ENCODE measurements at regions of chr9 and their contacts with region 1.

Region 1: DNA sequence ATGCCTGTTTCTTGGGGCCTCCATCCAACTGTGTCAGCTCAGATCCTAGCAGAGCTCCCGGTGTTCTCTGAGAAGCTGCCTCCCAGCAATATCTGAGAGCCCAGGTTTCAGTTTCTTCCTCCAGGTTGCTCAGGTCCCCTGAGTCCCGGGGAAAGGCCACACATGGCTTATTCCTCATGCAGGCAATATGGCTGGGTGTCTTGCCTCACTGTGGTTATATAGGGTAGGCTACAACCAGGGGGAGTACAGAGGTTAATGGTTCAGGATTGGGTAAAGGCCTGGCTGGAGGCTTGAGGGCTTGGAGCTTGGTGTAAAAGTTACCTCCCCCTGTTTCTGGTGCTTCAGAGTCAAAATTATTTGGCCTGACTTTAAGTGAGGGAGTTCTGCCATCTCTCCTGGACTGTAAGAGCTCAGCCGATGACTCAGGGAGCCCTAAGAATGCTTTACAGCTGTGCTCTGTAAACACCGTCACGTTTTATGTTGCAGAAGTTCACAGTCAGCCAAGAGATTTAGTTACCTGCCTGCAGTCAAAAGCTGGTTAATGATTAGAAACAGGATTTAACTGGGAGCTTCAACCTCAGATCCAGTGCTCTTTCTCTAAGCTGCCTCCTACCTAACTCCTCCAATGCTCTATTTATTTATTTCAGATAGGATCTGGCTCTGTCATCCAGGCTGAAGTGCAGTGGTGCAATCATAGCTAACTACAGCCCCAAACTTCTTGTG is 24.3 kb upstream of the UBAP2 start:
- DNase-seq: peak in 1 of 4 experiments; percentile 14
- ATAC-seq: peak; percentile 68
- H3K4me3 ChIP-seq: no peak overlapping the region
- H3K27ac ChIP-seq: no peak overlapping the region; the same call in 2 of the 3 replicates
- H3K4me1 ChIP-seq: peaks cover 2 to 7% of the 10 kb centered on the region in 2 experiments; a peak in 4 of 5 replicates
- H3K27me3 ChIP-seq: no peaks in the 10 kb centered on the region
- CTCF ChIP-seq: no peak
- EP300 ChIP-seq: no peak
- POLR2A ChIP-seq: no peak
- RAD21 ChIP-seq: no peak

Region 2: DNA sequence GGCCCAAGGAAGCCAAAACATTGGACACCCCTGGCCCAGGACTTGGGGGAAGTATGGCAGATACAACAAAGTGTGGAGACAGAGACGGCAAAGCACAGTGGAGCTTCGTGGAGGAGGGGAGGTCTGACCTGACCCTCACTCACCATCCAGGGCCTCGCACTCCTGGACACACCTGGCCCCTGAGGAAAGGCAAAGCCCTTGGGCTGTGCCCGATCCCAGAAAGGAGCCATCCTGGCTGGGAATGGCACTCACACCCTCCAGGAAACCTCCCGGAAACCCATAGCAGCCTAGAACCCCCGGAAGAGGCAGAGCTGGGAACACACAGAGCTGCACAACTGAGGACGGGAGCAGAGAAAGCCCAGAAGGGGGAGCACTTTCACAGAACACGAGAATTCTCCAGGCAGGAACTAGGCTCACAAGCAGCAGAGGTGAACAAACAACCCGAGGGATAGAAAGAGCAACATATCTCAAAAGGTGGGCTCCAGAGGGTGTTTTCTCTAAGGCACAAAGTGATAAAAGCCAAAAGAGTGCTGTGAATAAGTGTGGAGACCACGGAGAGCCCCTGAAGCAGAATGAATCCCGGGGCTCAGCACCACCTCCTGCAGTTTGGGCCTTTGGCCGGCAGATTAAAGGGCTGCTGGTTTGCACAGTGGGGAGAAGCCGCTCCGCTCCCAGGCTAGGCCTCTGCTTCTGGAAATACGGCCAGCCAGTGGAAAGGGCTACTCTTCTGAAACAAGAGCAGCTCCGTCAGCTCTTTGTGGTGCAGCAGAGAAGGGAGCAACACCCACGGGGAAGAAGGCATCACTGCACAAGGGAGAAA is 147.8 kb before region 1 on chr9:
- CTCF ChIA-PET with region 1: no interaction called
- POLR2A ChIA-PET with region 1: no interaction called
- in situ Hi-C with region 1: no loop called
- intact Hi-C with region 1: loop called (anchors 10 kb)
- DNase-seq: peak in 2 of 4 experiments; percentile 30 to 50
- ATAC-seq: peak; percentile 72
- H3K4me3 ChIP-seq: no peak overlapping the region
- H3K27ac ChIP-seq: no peak overlapping the region
- H3K4me1 ChIP-seq: no peaks in the 10 kb centered on the region
- H3K27me3 ChIP-seq: no peaks in the 10 kb centered on the region
- CTCF ChIP-seq: peak; percentile 41 to 50 (median 46); a peak in 5 of 6 replicates
- EP300 ChIP-seq: no peak
- POLR2A ChIP-seq: no peak
- RAD21 ChIP-seq: peak in 1 of 2 experiments; percentile 43; a peak in 2 of 4 replicates

Region 3: DNA sequence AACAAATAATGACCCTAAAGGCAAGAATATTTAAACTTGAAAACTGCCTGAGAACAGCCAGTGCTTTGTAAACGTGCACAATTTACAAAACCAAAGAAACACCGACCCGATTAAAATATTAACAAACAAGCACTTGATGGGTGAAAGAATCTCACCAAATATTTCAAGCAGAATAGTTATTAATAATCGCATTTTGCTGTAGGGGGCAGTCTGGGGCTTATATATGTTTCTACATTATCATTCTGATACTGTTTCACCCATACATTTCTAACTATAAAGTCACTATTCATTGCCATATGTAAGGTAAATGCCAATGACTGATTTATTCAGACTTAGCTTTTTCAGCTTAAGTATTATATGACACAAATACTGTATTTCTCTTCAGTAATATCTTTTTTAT is 62.0 kb before region 1 on chr9:
- CTCF ChIA-PET with region 1: interaction called, 5 read pairs
- POLR2A ChIA-PET with region 1: no interaction called
- in situ Hi-C with region 1: no loop called
- intact Hi-C with region 1: loop called (anchors 1 kb)
- DNase-seq: peak in 1 of 4 experiments; percentile 6
- ATAC-seq: 0 out of 3 replicates have a peak, but pooled peaks have one; percentile 42
- H3K4me3 ChIP-seq: no peak overlapping the region
- H3K27ac ChIP-seq: no peak overlapping the region
- H3K4me1 ChIP-seq: no peaks in the 10 kb centered on the region
- H3K27me3 ChIP-seq: no peaks in the 10 kb centered on the region
- CTCF ChIP-seq: peak; percentile 7 to 58 (median 15); a peak in 3 of 6 replicates
- EP300 ChIP-seq: no peak
- POLR2A ChIP-seq: no peak
- RAD21 ChIP-seq: peak in 1 of 2 experiments; percentile 48; a peak in 3 of 4 replicates

Region 4: GRCh38 chr9:34123682-34124081 is 50.7 kb after region 1 on chr9:
- CTCF ChIA-PET with region 1: no interaction called
- POLR2A ChIA-PET with region 1: no interaction called
- in situ Hi-C with region 1: no loop called
- intact Hi-C with region 1: no loop called
- DNase-seq: peak in 1 of 4 experiments; percentile 18
- ATAC-seq: no peak
- H3K4me3 ChIP-seq: peak overlapping the region; percentile 88; the same call in 1 of the 2 replicates
- H3K27ac ChIP-seq: peak overlapping the region; percentile 98
- H3K4me1 ChIP-seq: peaks cover 20 to 25% of the 10 kb centered on the region in 2 experiments
- H3K27me3 ChIP-seq: no peaks in the 10 kb centered on the region
- CTCF ChIP-seq: no peak
- EP300 ChIP-seq: no peak
- POLR2A ChIP-seq: no peak
- RAD21 ChIP-seq: no peak

Measured in K562 (cell line).